Mammary epithelial cell (primary cell): ENCODE measurements at regions of chr11 and their contacts with region 1.

Region 1: GRCh38 chr11:102007567-102008437 is 39.4 kb upstream of the CFAP300 start:
- DNase-seq: peak; percentile 59
- H3K4me3 ChIP-seq: no peak overlapping the region
- H3K27ac ChIP-seq: peak overlapping the region; percentile 36
- H3K4me1 ChIP-seq: peaks cover 30% of the 10 kb centered on the region
- H3K27me3 ChIP-seq: no peaks in the 10 kb centered on the region
- CTCF ChIP-seq: peak; percentile 46

Region 2: DNA sequence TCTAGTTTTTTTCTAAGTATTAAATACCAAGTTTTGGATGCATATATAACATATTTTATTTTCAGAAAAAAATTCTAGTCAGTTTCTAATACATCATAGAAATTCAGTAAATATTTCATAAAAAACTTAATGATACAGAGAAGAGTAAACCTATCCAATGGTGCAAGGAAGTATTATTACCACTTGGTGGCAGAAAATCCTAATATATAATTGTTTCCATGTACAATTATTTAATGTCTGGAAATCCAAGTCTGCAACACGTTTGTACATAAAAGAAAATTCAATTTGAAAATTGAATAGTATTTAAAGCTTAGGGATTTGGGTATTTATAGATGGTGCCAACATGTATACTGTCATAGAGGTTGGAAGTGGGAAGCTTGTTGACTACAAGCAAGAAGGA is 551.0 kb before region 1 on chr11:
- CTCF ChIA-PET with region 1: no interaction called
- dilution Hi-C with region 1: no loop called
- in situ Hi-C with region 1: loop called in 1 of 2 experiments (anchors 25 kb)
- intact Hi-C with region 1: loop called (anchors 2 kb)
- DNase-seq: no peak
- H3K4me3 ChIP-seq: no peak overlapping the region
- H3K27ac ChIP-seq: no peak overlapping the region
- H3K4me1 ChIP-seq: no peaks in the 10 kb centered on the region
- H3K27me3 ChIP-seq: no peaks in the 10 kb centered on the region
- CTCF ChIP-seq: peak; percentile 41 to 46

Region 3: DNA sequence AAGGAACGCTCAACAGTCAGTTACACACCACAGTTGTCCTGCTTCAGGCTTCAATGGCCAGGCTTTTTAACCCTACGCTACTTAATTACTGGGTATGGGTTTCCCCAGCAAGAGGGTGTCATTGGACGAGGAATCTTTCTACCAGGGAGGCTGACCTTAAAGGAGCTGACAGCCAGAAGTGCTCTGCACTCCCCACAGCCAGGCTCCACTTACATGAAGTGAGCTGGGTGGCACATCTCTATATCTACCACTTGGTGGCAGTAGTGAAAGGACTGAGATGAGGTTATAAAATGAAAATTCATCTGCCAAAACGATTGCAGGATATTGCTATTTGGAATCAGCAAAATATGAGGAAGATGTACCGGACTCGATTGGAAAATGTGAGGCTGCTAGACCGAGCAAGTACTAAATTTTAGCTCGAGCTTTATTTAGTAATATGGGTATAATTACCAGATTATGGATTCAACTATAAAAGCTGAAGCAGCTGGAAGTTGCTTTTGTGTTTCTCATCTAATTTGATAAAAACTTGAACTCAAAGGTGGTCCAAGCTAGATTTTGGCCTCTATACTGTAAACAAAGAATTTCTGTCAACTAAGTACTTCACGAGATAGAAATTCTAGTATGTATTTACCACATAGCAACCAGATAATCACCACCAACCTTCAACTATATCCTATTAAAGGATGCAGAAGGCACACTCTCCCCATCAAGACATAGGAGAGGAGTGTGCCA is 146.9 kb before region 1 on chr11:
- CTCF ChIA-PET with region 1: interaction called, 27 read pairs
- dilution Hi-C with region 1: loop called (anchors 5 kb)
- in situ Hi-C with region 1: no loop called
- intact Hi-C with region 1: loop called (anchors 1 kb)
- DNase-seq: peak; percentile 36
- H3K4me3 ChIP-seq: no peak overlapping the region
- H3K27ac ChIP-seq: no peak overlapping the region
- H3K4me1 ChIP-seq: peaks cover 13% of the 10 kb centered on the region
- H3K27me3 ChIP-seq: no peaks in the 10 kb centered on the region
- CTCF ChIP-seq: peak; percentile 82 to 84

Region 4: GRCh38 chr11:101914738-101915426 is 92.9 kb before region 1 on chr11 and contains the start of gene CEP126:
- CTCF ChIA-PET with region 1: no interaction called
- dilution Hi-C with region 1: no loop called
- in situ Hi-C with region 1: no loop called
- intact Hi-C with region 1: loop called (anchors 2 kb)
- DNase-seq: peak; percentile 92
- H3K4me3 ChIP-seq: peak within 1 kb of the TSS; percentile 75 to 84 (median 82)
- H3K27ac ChIP-seq: peak within 1 kb of the TSS; percentile 93
- H3K4me1 ChIP-seq: peaks cover 12% of the 10 kb centered on the region
- H3K27me3 ChIP-seq: no peaks in the 10 kb centered on the region
- CTCF ChIP-seq: peak; percentile 20 to 59
- total RNA-seq, gene CEP126: 2.2 to 2.8 TPM

Region 5: GRCh38 chr11:102061276-102061675 is 53.5 kb after region 1 on chr11:
- CTCF ChIA-PET with region 1: interaction called, 3 read pairs
- dilution Hi-C with region 1: loop called (anchors 5 kb)
- in situ Hi-C with region 1: no loop called
- intact Hi-C with region 1: no loop called
- DNase-seq: no peak
- H3K4me3 ChIP-seq: no peak overlapping the region
- H3K27ac ChIP-seq: no peak overlapping the region
- H3K4me1 ChIP-seq: peaks cover 18% of the 10 kb centered on the region
- H3K27me3 ChIP-seq: no peaks in the 10 kb centered on the region
- CTCF ChIP-seq: peak; percentile 25 to 63

Region 6: DNA sequence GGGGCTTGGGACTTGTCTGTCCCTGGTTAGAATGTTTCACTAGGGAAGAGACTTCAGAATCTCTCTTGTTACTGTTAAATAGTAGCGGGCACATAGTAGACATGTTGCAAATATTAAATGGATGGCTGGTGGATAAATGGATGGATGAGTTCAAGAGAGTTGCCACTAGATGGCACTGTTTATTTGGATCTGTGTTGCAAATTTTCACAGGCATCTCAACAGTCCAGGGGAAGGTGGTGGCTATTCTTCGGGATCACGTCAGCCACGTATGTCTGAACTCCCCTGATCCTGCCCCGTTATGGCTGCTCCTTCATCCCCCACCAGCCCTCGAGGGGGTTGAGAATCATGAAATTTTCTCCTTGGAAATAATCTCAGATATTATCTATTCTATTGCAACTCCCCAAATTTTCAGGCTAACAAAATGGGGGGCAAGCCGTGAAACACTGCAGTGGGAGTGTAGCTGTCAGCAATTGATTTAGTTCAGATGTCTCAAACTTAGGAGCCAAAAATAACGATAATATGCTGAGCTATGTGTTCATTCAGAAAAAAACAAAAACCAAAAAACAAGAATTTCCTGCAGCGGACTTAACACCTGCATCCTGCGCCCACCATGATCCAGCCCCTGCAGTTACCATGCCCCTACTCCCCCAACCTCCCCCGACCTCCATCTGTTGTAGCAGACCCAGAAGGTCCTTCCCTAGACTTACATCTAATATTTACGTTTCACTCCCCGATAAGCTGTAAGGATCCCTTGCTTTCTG is 280.3 kb after region 1 on chr11:
- CTCF ChIA-PET with region 1: no interaction called
- dilution Hi-C with region 1: no loop called
- in situ Hi-C with region 1: no loop called
- intact Hi-C with region 1: loop called (anchors 10 kb)
- DNase-seq: peak; percentile 70
- H3K4me3 ChIP-seq: no peak overlapping the region
- H3K27ac ChIP-seq: peak overlapping the region; percentile 15
- H3K4me1 ChIP-seq: peaks cover 10% of the 10 kb centered on the region
- H3K27me3 ChIP-seq: no peaks in the 10 kb centered on the region
- CTCF ChIP-seq: peak; percentile 46 to 71